HCT116 (cell line): ENCODE measurements at regions of chr11 and their contacts with region 1.

Region 1: DNA sequence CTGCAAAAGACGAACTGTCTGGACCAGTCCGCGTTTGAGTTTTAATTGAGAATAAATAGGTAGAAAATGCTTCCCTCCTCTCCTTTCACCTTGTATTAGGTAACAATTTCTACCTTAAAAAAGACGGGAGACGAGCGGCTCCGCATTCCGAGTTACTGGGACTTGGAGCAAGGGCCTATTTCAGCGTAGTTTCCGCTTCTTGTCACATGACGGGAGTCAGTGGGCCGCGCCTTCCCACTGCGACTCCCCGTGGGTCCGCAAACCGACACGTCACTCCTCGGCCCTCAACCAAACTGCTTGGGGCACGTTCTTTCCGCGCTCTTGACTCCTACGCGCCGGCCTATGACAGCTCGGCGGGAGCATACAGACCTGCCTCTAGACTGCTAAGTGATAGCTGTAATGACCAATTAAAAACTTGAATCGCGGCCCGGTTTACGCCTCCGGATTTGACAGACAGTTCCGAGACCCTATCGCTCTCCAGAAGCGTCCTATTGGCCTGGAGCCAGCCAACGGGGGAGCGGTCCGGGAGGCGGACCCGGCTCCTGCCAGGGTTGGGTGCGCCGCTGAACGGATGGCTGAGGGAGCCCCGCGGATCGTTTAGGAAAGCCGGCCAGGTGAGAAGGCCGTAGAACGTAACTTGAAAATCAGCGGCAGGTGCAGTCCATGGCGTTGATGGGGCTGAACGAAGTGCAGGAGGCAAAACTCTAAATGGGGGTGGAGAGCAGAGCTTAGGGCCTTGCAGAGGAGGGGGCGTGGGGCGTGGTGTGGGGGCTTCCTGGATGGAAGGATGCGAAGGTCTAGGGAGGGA is at the start of gene STT3A:
- DNase-seq: peak; percentile 100
- ATAC-seq: peak; percentile 95
- H3K4me3 ChIP-seq: peak within 1 kb of the TSS; percentile 88 to 91
- H3K27ac ChIP-seq: peak within 1 kb of the TSS; percentile 70
- H3K4me1 ChIP-seq: peaks cover 6 to 30% of the 10 kb centered on the region in 2 experiments; a peak in 3 of 4 replicates
- H3K27me3 ChIP-seq: no peaks in the 10 kb centered on the region
- CTCF ChIP-seq: no peak
- POLR2A ChIP-seq: peak; percentile 65
- RAD21 ChIP-seq: no peak
- total RNA-seq, gene STT3A: 156 TPM

Region 2: GRCh38 chr11:125568970-125569914 is 23.3 kb before region 1 on chr11 and contains the start of gene EI24:
- CTCF ChIA-PET with region 1: no interaction called
- POLR2A ChIA-PET with region 1: interaction called, 4 read pairs
- RAD21 ChIA-PET with region 1: no interaction called
- intact Hi-C with region 1: loop called (anchors 2 kb)
- DNase-seq: peak; percentile 84
- ATAC-seq: peak; percentile 96
- H3K4me3 ChIP-seq: peak within 1 kb of the TSS; percentile 61 to 99
- H3K27ac ChIP-seq: peak within 1 kb of the TSS; percentile 90
- H3K4me1 ChIP-seq: peaks cover 8 to 11% of the 10 kb centered on the region in 2 experiments
- H3K27me3 ChIP-seq: no peaks in the 10 kb centered on the region
- CTCF ChIP-seq: peak; percentile 23 to 70 (median 42); a peak in 4 of 6 replicates
- POLR2A ChIP-seq: no peak
- RAD21 ChIP-seq: peak; percentile 43
- total RNA-seq, gene EI24: 130 TPM

Region 3: GRCh38 chr11:125625630-125626287 is 33.2 kb after region 1 on chr11:
- CTCF ChIA-PET with region 1: no interaction called
- POLR2A ChIA-PET with region 1: interaction called, 6 read pairs
- RAD21 ChIA-PET with region 1: no interaction called
- intact Hi-C with region 1: loop called (anchors 2 kb)
- DNase-seq: peak; percentile 86
- ATAC-seq: peak; percentile 86
- H3K4me3 ChIP-seq: peak overlapping the region; percentile 56 to 75
- H3K27ac ChIP-seq: peak overlapping the region; percentile 85
- H3K4me1 ChIP-seq: peaks cover 4 to 17% of the 10 kb centered on the region in 2 experiments; a peak in 3 of 4 replicates
- H3K27me3 ChIP-seq: no peaks in the 10 kb centered on the region
- CTCF ChIP-seq: no peak
- POLR2A ChIP-seq: peak; percentile 72
- RAD21 ChIP-seq: no peak